WTC11 (cell line): ENCODE measurements at regions of chr1 and their contacts with region 1.

Region 1: GRCh38 chr1:28436211-28436769 is 66.8 kb downstream of the PHACTR4 start:
- DNase-seq: no peak
- ATAC-seq: peak; percentile 28; the same call in 1 of the 2 replicates
- H3K4me3 Mint-ChIP-seq: no peak overlapping the region
- H3K27ac Mint-ChIP-seq: no peak overlapping the region
- H3K4me1 Mint-ChIP-seq: peaks cover 18% of the 10 kb centered on the region
- H3K27me3 Mint-ChIP-seq: no peaks in the 10 kb centered on the region
- CTCF ChIP-seq: no peak

Region 2: DNA sequence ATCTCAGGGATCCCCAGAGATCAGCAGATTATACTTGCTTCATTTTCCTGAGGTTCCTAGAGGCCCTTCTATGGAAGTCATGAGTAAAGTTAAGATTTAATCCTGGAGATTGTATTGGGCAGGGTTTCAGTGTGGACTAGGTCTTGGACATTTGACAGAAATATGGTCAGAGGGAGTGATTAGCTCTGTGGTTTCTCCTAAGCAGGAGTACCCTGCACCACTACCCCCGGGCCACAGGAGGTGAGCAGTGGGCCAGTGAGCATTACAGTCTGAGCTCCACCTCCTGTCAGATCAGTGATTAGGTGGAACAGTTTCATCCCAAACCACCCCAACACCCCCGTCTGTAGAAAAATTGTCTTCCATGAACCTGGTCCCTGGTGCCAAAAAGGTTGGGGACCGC is 23.6 kb before region 1 on chr1:
- CTCF ChIA-PET with region 1: interaction called, 10 read pairs
- POLR2A ChIA-PET with region 1: interaction called, 8 read pairs
- DNase-seq: no peak
- ATAC-seq: peak; percentile 52
- H3K4me3 Mint-ChIP-seq: no peak overlapping the region
- H3K27ac Mint-ChIP-seq: peak overlapping the region; percentile 82; the same call in 1 of the 2 replicates
- H3K4me1 Mint-ChIP-seq: peaks cover 47% of the 10 kb centered on the region
- H3K27me3 Mint-ChIP-seq: no peaks in the 10 kb centered on the region
- CTCF ChIP-seq: no peak